CD8-positive, alpha-beta memory T cell (primary cell): ENCODE measurements at regions of chr10 and their contacts with region 1.

Region 1: GRCh38 chr10:97686962-97687784 is at the start of gene AVPI1:
- DNase-seq: peak; percentile 96 to 98 (median 97)
- H3K4me3 ChIP-seq: peak within 1 kb of the TSS; percentile 89
- H3K4me3 Mint-ChIP-seq: peak within 1 kb of the TSS; percentile 87 to 95 (median 89)
- H3K27ac ChIP-seq: peak within 1 kb of the TSS; percentile 79
- H3K27ac Mint-ChIP-seq: peak within 1 kb of the TSS; percentile 78 to 96 (median 92)
- H3K4me1 ChIP-seq: peaks cover 26% of the 10 kb centered on the region
- H3K4me1 Mint-ChIP-seq: peaks cover 14 to 33% (median 25%) of the 10 kb centered on the region in 3 donors
- H3K27me3 ChIP-seq: no peaks in the 10 kb centered on the region
- H3K27me3 Mint-ChIP-seq: no peaks in the 10 kb centered on the region
- total RNA-seq, gene AVPI1: 2.3 TPM

Region 2: GRCh38 chr10:97676770-97677581 is 10.2 kb before region 1 on chr10:
- CTCF ChIA-PET with region 1: interaction called, 39 read pairs
- POLR2A ChIA-PET with region 1: interaction called, 5 read pairs
- DNase-seq: peak; percentile 21 to 62 (median 42)
- H3K4me3 ChIP-seq: no peak overlapping the region
- H3K4me3 Mint-ChIP-seq: no peak overlapping the region
- H3K27ac ChIP-seq: no peak overlapping the region
- H3K27ac Mint-ChIP-seq: peak overlapping the region in 3 of 8 donors; percentile 10 to 72 (median 58)
- H3K4me1 ChIP-seq: no peaks in the 10 kb centered on the region
- H3K4me1 Mint-ChIP-seq: no peaks in the 10 kb centered on the region
- H3K27me3 ChIP-seq: no peaks in the 10 kb centered on the region
- H3K27me3 Mint-ChIP-seq: no peaks in the 10 kb centered on the region

Region 3: GRCh38 chr10:97701438-97702069 is 14.4 kb after region 1 on chr10:
- CTCF ChIA-PET with region 1: interaction called, 24 read pairs
- POLR2A ChIA-PET with region 1: no interaction called
- DNase-seq: peak in 4 of 5 donors; percentile 24 to 67 (median 52)
- H3K4me3 ChIP-seq: no peak overlapping the region
- H3K4me3 Mint-ChIP-seq: no peak overlapping the region
- H3K27ac ChIP-seq: no peak overlapping the region
- H3K27ac Mint-ChIP-seq: no peak overlapping the region
- H3K4me1 ChIP-seq: no peaks in the 10 kb centered on the region
- H3K4me1 Mint-ChIP-seq: no peaks in the 10 kb centered on the region
- H3K27me3 ChIP-seq: no peaks in the 10 kb centered on the region
- H3K27me3 Mint-ChIP-seq: peaks cover 16 to 20% of the 10 kb centered on the region in 2 donors

Region 4: GRCh38 chr10:97714048-97714371 is 26.8 kb after region 1 on chr10:
- CTCF ChIA-PET with region 1: interaction called, 16 read pairs
- POLR2A ChIA-PET with region 1: interaction called, 13 read pairs
- DNase-seq: peak; percentile 26 to 69 (median 50)
- H3K4me3 ChIP-seq: peak overlapping the region; percentile 59
- H3K4me3 Mint-ChIP-seq: peak overlapping the region; percentile 86 to 100 (median 99)
- H3K27ac ChIP-seq: peak overlapping the region; percentile 9
- H3K27ac Mint-ChIP-seq: peak overlapping the region; percentile 18 to 98 (median 95)
- H3K4me1 ChIP-seq: no peaks in the 10 kb centered on the region
- H3K4me1 Mint-ChIP-seq: peaks cover 9 to 23% (median 9%) of the 10 kb centered on the region in 3 donors
- H3K27me3 ChIP-seq: no peaks in the 10 kb centered on the region
- H3K27me3 Mint-ChIP-seq: peaks cover 18 to 23% of the 10 kb centered on the region in 2 donors

Region 5: DNA sequence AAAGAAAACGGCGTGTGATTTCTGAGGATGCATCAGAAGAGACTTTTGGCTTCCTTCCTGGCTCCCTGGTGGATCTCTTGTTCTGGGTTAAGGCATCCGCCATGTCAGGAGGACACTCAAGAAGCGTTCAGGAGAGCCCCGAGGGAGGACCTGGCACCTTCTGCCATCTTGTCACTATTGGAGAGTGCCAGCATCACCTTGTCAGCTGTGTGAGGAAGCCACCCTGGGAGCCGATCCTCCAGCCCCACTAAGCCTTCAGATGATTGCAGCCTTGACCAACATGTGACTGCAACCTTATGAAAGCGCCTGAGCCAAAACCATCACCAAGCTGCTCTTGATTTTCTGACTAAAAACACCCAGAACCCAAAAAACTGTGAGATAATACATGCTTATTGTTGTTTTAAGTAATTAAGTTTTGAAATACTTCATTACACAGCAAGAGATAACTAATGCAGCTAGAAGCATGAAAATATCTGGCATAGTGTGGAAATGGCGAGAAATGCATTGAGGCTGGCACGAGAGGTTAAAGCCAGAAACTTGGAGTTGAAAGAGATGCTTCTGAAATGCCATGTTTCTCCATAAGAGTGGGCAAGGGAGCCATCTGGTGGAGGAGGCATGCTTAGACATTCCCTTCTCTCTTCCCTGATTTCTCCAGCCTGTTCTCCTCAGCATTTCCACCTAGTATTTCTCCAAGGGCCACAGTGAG is 44.3 kb after region 1 on chr10:
- CTCF ChIA-PET with region 1: interaction called, 28 read pairs
- POLR2A ChIA-PET with region 1: interaction called, 20 read pairs
- DNase-seq: peak; percentile 32 to 61 (median 50)
- H3K4me3 ChIP-seq: no peak overlapping the region
- H3K4me3 Mint-ChIP-seq: peak overlapping the region in 1 of 7 donors; percentile 16
- H3K27ac ChIP-seq: no peak overlapping the region
- H3K27ac Mint-ChIP-seq: no peak overlapping the region
- H3K4me1 ChIP-seq: peaks cover 2% of the 10 kb centered on the region
- H3K4me1 Mint-ChIP-seq: peaks cover 6 to 9% (median 9%) of the 10 kb centered on the region in 3 donors
- H3K27me3 ChIP-seq: no peaks in the 10 kb centered on the region
- H3K27me3 Mint-ChIP-seq: peaks cover 3 to 22% of the 10 kb centered on the region in 2 donors

Region 6: DNA sequence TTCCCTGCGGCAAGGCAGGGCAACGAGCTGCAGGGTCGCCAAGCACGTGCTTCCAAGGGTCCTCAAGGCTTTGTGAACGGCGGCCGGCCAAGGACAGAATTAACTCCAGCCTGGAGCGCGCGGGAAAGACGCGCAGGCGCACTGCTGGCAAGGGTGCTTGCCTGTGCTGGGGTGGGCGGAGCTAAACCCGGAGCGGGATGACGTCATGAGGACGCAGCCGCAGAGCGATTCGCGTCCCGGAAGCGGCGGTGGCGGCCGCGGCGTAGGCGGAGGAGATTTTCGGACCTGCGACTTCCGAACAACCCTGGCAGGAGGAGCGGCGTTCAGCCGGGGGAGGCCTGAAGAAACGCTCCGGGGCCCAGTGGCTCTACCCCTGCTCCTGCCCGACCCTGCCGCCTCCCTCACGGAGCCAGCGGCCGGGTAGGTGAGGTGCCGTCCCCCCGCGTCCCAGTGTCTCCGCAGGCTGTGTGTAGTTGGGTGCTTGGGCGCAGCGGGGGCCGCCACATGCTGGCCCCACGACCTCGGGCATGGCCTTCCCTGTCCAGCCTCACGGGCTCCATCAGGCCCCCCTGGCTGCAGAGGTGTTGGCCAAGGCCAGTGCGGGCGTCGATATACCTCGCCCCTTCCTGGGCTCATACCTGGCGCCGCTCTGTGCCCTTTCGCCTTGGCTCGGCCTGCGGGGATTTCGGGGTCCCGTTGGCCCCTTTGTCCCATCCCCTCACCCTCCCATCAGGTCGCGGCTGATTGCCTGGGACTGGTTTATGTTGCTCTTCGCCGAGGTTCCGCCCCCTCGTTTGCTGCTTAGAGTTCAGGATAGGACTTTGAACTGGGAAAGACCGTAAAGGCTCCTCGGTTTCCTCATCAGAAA is 50.0 kb after region 1 on chr10 and contains the start of gene ZFYVE27:
- CTCF ChIA-PET with region 1: interaction called, 28 read pairs
- POLR2A ChIA-PET with region 1: interaction called, 20 read pairs
- DNase-seq: peak; percentile 91 to 97 (median 94)
- H3K4me3 ChIP-seq: peak within 1 kb of the TSS; percentile 96
- H3K4me3 Mint-ChIP-seq: peak within 1 kb of the TSS; percentile 93 to 98 (median 96)
- H3K27ac ChIP-seq: peak within 1 kb of the TSS; percentile 92
- H3K27ac Mint-ChIP-seq: peak within 1 kb of the TSS; percentile 90 to 99 (median 98)
- H3K4me1 ChIP-seq: peaks cover 31% of the 10 kb centered on the region
- H3K4me1 Mint-ChIP-seq: peaks cover 50 to 58% (median 57%) of the 10 kb centered on the region in 3 donors
- H3K27me3 ChIP-seq: no peaks in the 10 kb centered on the region
- H3K27me3 Mint-ChIP-seq: peaks cover 0 to 2% of the 10 kb centered on the region in 2 donors
- total RNA-seq, gene ZFYVE27: 27.4 to 28.6 TPM